IMR-90 (cell line): ENCODE measurements at regions of chr9 and their contacts with region 1.

Region 1: GRCh38 chr9:13446938-13447842 is 167.7 kb upstream of the MPDZ start:
- DNase-seq: no peak
- ATAC-seq: no peak
- H3K4me3 ChIP-seq: no peak overlapping the region
- H3K27ac ChIP-seq: no peak overlapping the region
- H3K4me1 ChIP-seq: no peaks in the 10 kb centered on the region
- H3K27me3 ChIP-seq: peaks cover 12% of the 10 kb centered on the region
- CTCF ChIP-seq: 0 out of 2 replicates have a peak, but pooled peaks have one; percentile 4
- POLR2A ChIP-seq: no peak
- RAD21 ChIP-seq: no peak

Region 2: GRCh38 chr9:13291718-13292117 is 155.5 kb before region 1 on chr9:
- CTCF ChIA-PET with region 1: no interaction called
- POLR2A ChIA-PET with region 1: no interaction called
- dilution Hi-C with region 1: no loop called
- in situ Hi-C with region 1: no loop called
- intact Hi-C with region 1: no loop called
- DNase-seq: no peak
- ATAC-seq: no peak
- H3K4me3 ChIP-seq: no peak overlapping the region
- H3K27ac ChIP-seq: no peak overlapping the region
- H3K4me1 ChIP-seq: no peaks in the 10 kb centered on the region
- H3K27me3 ChIP-seq: no peaks in the 10 kb centered on the region
- CTCF ChIP-seq: no peak
- POLR2A ChIP-seq: no peak
- RAD21 ChIP-seq: no peak

Region 3: DNA sequence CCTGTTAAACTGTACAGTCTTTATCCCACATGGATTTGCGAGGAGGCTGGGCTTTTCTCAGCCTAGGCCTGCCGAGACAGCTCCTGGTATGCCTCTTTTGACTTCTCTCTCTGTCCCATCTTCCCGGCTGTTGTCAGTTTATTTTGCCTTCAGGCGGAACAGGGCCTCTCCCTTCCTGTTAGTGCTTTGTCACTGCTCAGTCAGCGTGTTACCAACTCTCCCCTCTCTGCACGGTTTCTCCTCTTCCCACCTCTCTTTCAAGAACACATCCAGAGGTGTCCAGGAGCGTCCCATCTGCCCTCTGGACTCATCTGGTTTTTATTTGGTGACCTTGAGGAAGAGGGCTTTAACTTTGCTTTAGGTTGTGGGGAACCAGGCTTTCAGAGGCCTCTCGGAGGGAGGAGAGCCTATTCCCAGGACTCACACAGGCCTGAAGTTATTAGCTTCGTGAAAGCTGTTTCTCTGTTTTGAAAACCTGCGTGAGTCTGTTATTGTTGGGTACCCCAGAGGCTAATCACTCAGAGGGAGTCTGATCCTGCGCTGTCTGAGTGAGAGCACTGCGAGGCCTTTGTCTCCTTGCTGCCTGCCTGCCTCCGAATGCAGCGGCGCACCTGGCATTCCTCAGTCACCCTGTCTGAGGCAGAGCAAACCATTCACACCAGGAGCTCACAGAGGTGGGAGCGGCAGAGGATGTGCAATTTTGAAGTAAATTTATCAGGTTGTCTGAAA is 66.7 kb after region 1 on chr9:
- CTCF ChIA-PET with region 1: no interaction called
- POLR2A ChIA-PET with region 1: interaction called, 12 read pairs
- dilution Hi-C with region 1: no loop called
- in situ Hi-C with region 1: no loop called
- intact Hi-C with region 1: no loop called
- DNase-seq: no peak
- ATAC-seq: 0 out of 2 replicates have a peak, but pooled peaks have one; percentile 32
- H3K4me3 ChIP-seq: no peak overlapping the region
- H3K27ac ChIP-seq: no peak overlapping the region
- H3K4me1 ChIP-seq: no peaks in the 10 kb centered on the region
- H3K27me3 ChIP-seq: no peaks in the 10 kb centered on the region
- CTCF ChIP-seq: no peak
- POLR2A ChIP-seq: no peak
- RAD21 ChIP-seq: no peak